Panc1 (cell line): ENCODE measurements at regions of chr19 and their contacts with region 1.

Region 1: DNA sequence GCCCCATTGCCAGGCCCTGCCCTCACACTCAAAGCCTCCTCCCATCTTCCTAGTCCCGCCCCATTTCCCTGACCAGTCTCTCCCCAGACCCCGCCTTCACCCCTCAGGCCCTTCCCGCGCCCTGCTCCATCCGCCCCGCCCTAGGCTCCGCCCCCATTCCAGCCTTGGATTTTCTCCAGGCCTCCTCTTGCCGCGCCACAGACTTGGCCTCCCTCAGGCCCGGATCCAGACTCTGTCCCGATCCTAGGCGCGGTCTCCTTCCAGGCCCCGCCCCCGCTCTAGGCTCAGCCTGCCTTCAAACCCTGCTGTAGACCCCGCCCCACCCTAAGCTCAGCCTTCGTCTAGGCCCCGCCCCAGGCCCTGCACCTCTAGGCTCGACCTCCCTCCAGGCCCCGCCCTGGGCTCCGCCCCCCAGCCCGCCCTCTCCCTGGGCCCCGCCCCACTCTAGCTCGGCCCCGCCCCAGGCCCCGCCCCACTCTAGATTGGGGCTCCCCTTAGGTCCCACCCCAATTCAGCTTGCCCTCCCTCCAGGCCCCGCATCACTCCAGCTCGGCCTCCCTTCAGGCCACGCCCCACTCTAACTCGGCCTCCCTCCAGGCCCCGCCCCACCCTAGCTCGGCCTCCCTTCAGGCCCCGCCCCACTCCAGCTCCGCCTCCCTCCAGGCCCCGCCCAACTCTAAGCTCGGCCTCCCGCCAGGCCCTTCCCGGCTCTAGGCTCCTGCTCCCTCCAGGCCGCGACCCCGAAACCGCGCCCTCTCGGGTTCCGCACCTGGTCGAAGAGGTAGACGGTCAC is 18.5 kb downstream of the LMTK3 start:
- DNase-seq: peak; percentile 75
- ATAC-seq: peak; percentile 78
- H3K4me3 ChIP-seq: peak overlapping the region; percentile 41 to 49
- H3K27ac ChIP-seq: no peak overlapping the region; the same call in 1 of the 2 replicates
- H3K4me1 ChIP-seq: peaks cover 18% of the 10 kb centered on the region
- H3K27me3 ChIP-seq: no peaks in the 10 kb centered on the region
- CTCF ChIP-seq: no peak

Region 2: GRCh38 chr19:48568345-48568886 is 75.3 kb after region 1 on chr19:
- CTCF ChIA-PET with region 1: interaction called, 3 read pairs
- POLR2A ChIA-PET with region 1: interaction called, 14 read pairs
- in situ Hi-C with region 1: no loop called
- intact Hi-C with region 1: no loop called
- DNase-seq: no peak
- ATAC-seq: peak; percentile 97
- H3K4me3 ChIP-seq: peak overlapping the region; percentile 7 to 40; a peak in 2 of 4 replicates
- H3K27ac ChIP-seq: peak overlapping the region; percentile 82
- H3K4me1 ChIP-seq: peaks cover 14% of the 10 kb centered on the region
- H3K27me3 ChIP-seq: no peaks in the 10 kb centered on the region
- CTCF ChIP-seq: no peak

Region 3: GRCh38 chr19:48588670-48589399 is 95.7 kb after region 1 on chr19:
- CTCF ChIA-PET with region 1: interaction called, 11 read pairs
- POLR2A ChIA-PET with region 1: no interaction called
- in situ Hi-C with region 1: no loop called
- intact Hi-C with region 1: no loop called
- DNase-seq: peak; percentile 47
- ATAC-seq: peak; percentile 93
- H3K4me3 ChIP-seq: peak overlapping the region; percentile 39 to 60
- H3K27ac ChIP-seq: no peak overlapping the region
- H3K4me1 ChIP-seq: 0 out of 2 replicates have a peak, but pooled peaks cover 4% of the 10 kb centered on the region
- H3K27me3 ChIP-seq: no peaks in the 10 kb centered on the region
- CTCF ChIP-seq: peak; percentile 94

Region 4: GRCh38 chr19:48637170-48637947 is 144.2 kb after region 1 on chr19 and contains the start of gene DBP:
- CTCF ChIA-PET with region 1: interaction called, 10 read pairs
- POLR2A ChIA-PET with region 1: no interaction called
- in situ Hi-C with region 1: no loop called
- intact Hi-C with region 1: no loop called
- DNase-seq: peak; percentile 72
- ATAC-seq: peak; percentile 85
- H3K4me3 ChIP-seq: peak within 1 kb of the TSS; percentile 62 to 71
- H3K27ac ChIP-seq: peak within 1 kb of the TSS; percentile 90
- H3K4me1 ChIP-seq: peaks cover 25% of the 10 kb centered on the region
- H3K27me3 ChIP-seq: no peaks in the 10 kb centered on the region
- CTCF ChIP-seq: no peak
- total RNA-seq, gene DBP: 7.4 TPM